GM10248 (cell line): ENCODE measurements at regions of chr14 and their contacts with region 1.

Region 1: GRCh38 chr14:46581036-46581671 is 70.4 kb downstream of the RPL10L start:
- DNase-seq: peak; percentile 13
- CTCF ChIP-seq: peak; percentile 47

Region 2: GRCh38 chr14:46306267-46306666 is 274.9 kb before region 1 on chr14:
- CTCF ChIA-PET with region 1: no interaction called
- POLR2A ChIA-PET with region 1: no interaction called
- DNase-seq: no peak
- CTCF ChIP-seq: no peak

Region 3: GRCh38 chr14:46596236-46596635 is 15.1 kb after region 1 on chr14:
- CTCF ChIA-PET with region 1: interaction called, 12 read pairs
- POLR2A ChIA-PET with region 1: no interaction called
- DNase-seq: no peak
- CTCF ChIP-seq: no peak